ENCODE measurements at regions of chr11 and their contacts with region 1.

Region 1: GRCh38 chr11:121464352-121464946 is 11.7 kb upstream of the SORL1-AS1 start:
- DNase-seq: peak in 7 of 9 donors; percentile 29 to 83 (median 45)
- ATAC-seq: peak; percentile 66
- H3K4me3 ChIP-seq: peak overlapping the region; percentile 23
- H3K4me3 Mint-ChIP-seq: peak overlapping the region; percentile 50 to 99 (median 80)
- H3K27ac ChIP-seq: peak overlapping the region; percentile 77
- H3K27ac Mint-ChIP-seq: peak overlapping the region; percentile 85 to 99 (median 92)
- H3K4me1 ChIP-seq: peaks cover 97 to 99% of the 10 kb centered on the region in 2 donors
- H3K4me1 Mint-ChIP-seq: peaks cover 92 to 100% (median 96%) of the 10 kb centered on the region in 7 donors
- H3K27me3 ChIP-seq: no peaks in the 10 kb centered on the region
- H3K27me3 Mint-ChIP-seq: no peaks in the 10 kb centered on the region

Region 2: GRCh38 chr11:121328967-121329679 is 135.3 kb before region 1 on chr11:
- CTCF ChIA-PET with region 1: no interaction called
- POLR2A ChIA-PET with region 1: interaction called, 14 read pairs
- intact Hi-C with region 1: loop called in 1 of 2 experiments (anchors 2 kb)
- DNase-seq: peak in 4 of 9 donors; percentile 5 to 18 (median 8)
- ATAC-seq: peak; percentile 54
- H3K4me3 ChIP-seq: no peak overlapping the region
- H3K4me3 Mint-ChIP-seq: no peak overlapping the region
- H3K27ac ChIP-seq: no peak overlapping the region
- H3K27ac Mint-ChIP-seq: no peak overlapping the region
- H3K4me1 ChIP-seq: peaks cover 19 to 26% of the 10 kb centered on the region in 2 donors
- H3K4me1 Mint-ChIP-seq: peaks cover 3 to 20% (median 9%) of the 10 kb centered on the region in 7 donors
- H3K27me3 ChIP-seq: no peaks in the 10 kb centered on the region
- H3K27me3 Mint-ChIP-seq: peaks cover 0 to 2% (median 0%) of the 10 kb centered on the region in 5 donors

Region 3: DNA sequence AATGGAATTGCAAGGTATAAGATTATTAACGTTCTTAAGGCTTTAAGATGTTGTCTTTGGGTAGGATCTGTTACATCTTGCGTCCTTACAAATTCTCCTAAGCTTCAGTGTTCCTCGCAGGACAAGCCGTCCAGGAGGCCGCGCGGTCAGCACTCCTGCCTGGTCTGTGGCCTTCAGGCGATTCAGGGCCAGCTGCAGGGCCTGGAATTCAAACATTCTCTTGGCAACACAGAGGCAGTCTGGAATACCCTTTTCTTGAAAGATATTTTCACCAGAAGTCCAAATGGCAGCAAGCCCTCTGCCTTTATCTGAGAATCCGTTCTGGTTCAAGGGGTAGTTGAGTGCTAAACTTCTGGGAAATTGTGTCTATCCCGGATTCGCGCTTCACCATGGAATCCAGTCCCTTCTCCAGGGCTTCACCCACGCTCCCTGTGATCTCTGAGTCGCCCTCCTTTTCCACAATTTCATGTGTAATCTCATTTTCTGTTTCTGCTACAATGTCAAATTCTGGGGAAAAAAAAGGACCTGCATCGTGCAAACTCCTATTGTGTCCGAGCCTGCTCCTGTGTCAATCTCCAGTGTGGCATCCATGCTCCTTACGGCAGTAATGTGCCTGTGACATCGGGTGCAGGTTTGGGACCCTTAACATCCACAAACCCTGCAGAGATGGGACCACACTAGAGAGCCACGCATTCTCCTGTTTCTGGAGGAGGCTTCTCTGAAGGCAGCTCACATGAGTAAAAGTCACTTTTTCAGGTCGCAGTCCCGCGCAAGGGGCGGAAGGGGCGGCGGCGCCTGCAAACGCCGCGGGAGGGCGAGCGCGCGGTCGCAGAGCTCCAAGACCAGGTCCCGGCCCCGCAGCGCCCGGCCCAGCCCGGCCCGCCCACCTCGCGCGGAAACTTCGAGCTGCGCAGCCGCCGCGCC is 37.7 kb before region 1 on chr11:
- CTCF ChIA-PET with region 1: interaction called, 5 read pairs
- POLR2A ChIA-PET with region 1: interaction called, 10 read pairs
- intact Hi-C with region 1: no loop called
- DNase-seq: peak in 6 of 9 donors; percentile 30 to 56 (median 36)
- ATAC-seq: peak; percentile 79
- H3K4me3 ChIP-seq: peak overlapping the region; percentile 44
- H3K4me3 Mint-ChIP-seq: peak overlapping the region; percentile 67 to 86 (median 78)
- H3K27ac ChIP-seq: peak overlapping the region; percentile 37
- H3K27ac Mint-ChIP-seq: peak overlapping the region; percentile 5 to 89 (median 43)
- H3K4me1 ChIP-seq: peaks cover 0 to 27% of the 10 kb centered on the region in 2 donors
- H3K4me1 Mint-ChIP-seq: peaks cover 34 to 70% (median 54%) of the 10 kb centered on the region in 7 donors
- H3K27me3 ChIP-seq: no peaks in the 10 kb centered on the region
- H3K27me3 Mint-ChIP-seq: peaks cover 0 to 3% (median 0%) of the 10 kb centered on the region in 5 donors

Region 4: DNA sequence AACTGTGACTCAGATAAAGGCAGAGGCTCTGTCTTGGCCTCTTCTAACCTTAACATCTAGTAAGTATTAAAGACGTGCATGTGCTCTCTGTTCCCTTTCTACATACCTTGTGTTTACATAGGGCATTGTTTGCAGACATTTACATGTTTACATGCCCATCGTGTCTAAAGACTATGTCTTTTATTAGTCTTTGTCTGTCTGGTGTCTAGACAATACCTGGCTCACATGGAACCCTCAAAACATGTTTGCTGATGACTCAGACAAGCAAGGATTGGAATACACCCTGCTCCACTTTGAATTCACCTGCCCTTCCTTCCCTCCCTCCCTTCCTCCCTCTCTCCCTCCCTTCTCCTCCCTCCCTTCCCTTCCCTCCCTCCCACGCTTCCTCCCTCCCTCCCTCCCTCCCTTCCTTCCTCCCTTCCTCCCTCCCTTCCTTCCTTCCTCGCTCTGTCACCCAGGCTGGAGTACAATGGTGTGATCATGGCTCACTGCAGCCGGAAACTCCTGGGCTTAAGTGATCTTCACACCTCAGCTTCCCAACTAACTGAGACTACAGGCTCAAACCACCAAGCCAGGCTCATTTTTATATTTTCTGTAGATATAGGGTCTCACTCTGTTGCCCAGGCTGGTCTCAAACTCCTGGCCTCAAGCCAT is 12.1 kb after region 1 on chr11:
- CTCF ChIA-PET with region 1: interaction called, 9 read pairs
- POLR2A ChIA-PET with region 1: interaction called, 25 read pairs
- intact Hi-C with region 1: no loop called
- DNase-seq: no peak
- ATAC-seq: no peak
- H3K4me3 ChIP-seq: no peak overlapping the region
- H3K4me3 Mint-ChIP-seq: peak overlapping the region in 2 of 10 donors; percentile 6 to 75
- H3K27ac ChIP-seq: no peak overlapping the region
- H3K27ac Mint-ChIP-seq: peak overlapping the region; percentile 23 to 90 (median 66)
- H3K4me1 ChIP-seq: peaks cover 13 to 48% of the 10 kb centered on the region in 2 donors
- H3K4me1 Mint-ChIP-seq: peaks cover 50 to 95% (median 83%) of the 10 kb centered on the region in 7 donors
- H3K27me3 ChIP-seq: no peaks in the 10 kb centered on the region
- H3K27me3 Mint-ChIP-seq: no peaks in the 10 kb centered on the region

Region 5: GRCh38 chr11:121482231-121483129 is 18.0 kb after region 1 on chr11:
- CTCF ChIA-PET with region 1: interaction called, 9 read pairs
- POLR2A ChIA-PET with region 1: interaction called, 25 read pairs
- intact Hi-C with region 1: loop called (anchors 1 kb)
- DNase-seq: peak in 8 of 9 donors; percentile 45 to 72 (median 67)
- ATAC-seq: peak; percentile 87
- H3K4me3 ChIP-seq: peak overlapping the region; percentile 30
- H3K4me3 Mint-ChIP-seq: peak overlapping the region; percentile 73 to 89 (median 86)
- H3K27ac ChIP-seq: peak overlapping the region; percentile 61
- H3K27ac Mint-ChIP-seq: peak overlapping the region; percentile 84 to 97 (median 94)
- H3K4me1 ChIP-seq: peaks cover 25 to 44% of the 10 kb centered on the region in 2 donors
- H3K4me1 Mint-ChIP-seq: peaks cover 50 to 90% (median 81%) of the 10 kb centered on the region in 7 donors
- H3K27me3 ChIP-seq: no peaks in the 10 kb centered on the region
- H3K27me3 Mint-ChIP-seq: no peaks in the 10 kb centered on the region

Region 6: GRCh38 chr11:121494355-121495099 is 30.1 kb after region 1 on chr11:
- CTCF ChIA-PET with region 1: interaction called, 3 read pairs
- POLR2A ChIA-PET with region 1: interaction called, 17 read pairs
- intact Hi-C with region 1: no loop called
- DNase-seq: peak in 7 of 9 donors; percentile 11 to 36 (median 26)
- ATAC-seq: peak; percentile 72
- H3K4me3 ChIP-seq: no peak overlapping the region
- H3K4me3 Mint-ChIP-seq: peak overlapping the region; percentile 51 to 83 (median 70)
- H3K27ac ChIP-seq: peak overlapping the region; percentile 53
- H3K27ac Mint-ChIP-seq: peak overlapping the region; percentile 44 to 89 (median 79)
- H3K4me1 ChIP-seq: peaks cover 15 to 31% of the 10 kb centered on the region in 2 donors
- H3K4me1 Mint-ChIP-seq: peaks cover 34 to 84% (median 72%) of the 10 kb centered on the region in 7 donors
- H3K27me3 ChIP-seq: no peaks in the 10 kb centered on the region
- H3K27me3 Mint-ChIP-seq: no peaks in the 10 kb centered on the region

Region 7: DNA sequence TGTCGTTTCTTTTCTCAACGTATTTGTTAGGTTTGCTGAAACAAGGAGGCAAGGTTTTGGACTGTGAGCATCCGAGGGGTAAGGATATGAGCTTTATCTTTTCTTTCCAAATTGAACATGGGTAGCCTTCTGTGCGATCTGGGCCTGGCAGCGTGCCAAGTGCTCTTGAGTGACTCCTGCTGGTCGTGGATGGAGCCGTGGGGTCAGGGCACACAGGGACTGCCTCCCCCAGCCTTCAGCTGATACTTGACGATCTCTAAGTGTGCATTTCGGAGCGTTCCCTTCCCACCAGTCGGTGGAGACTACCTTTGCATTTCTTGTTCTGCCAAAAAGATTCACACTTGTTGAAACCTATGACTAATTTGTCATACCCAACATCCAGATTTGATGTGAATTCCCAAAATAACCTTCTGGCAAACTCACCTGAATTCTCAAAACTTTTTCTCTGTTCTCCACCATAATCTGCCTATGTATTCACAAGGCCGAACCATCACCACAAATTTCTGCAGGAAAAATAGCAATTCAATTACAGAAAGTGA is 1770.7 kb after region 1 on chr11:
- CTCF ChIA-PET with region 1: no interaction called
- POLR2A ChIA-PET with region 1: no interaction called
- intact Hi-C with region 1: no loop called
- DNase-seq: peak in 8 of 9 donors; percentile 20 to 59 (median 33)
- ATAC-seq: no peak
- H3K4me3 ChIP-seq: no peak overlapping the region
- H3K4me3 Mint-ChIP-seq: no peak overlapping the region
- H3K27ac ChIP-seq: no peak overlapping the region
- H3K27ac Mint-ChIP-seq: peak overlapping the region in 2 of 9 donors; percentile 29 to 93
- H3K4me1 ChIP-seq: peaks cover 12 to 17% of the 10 kb centered on the region in 2 donors
- H3K4me1 Mint-ChIP-seq: peaks cover 14 to 43% (median 17%) of the 10 kb centered on the region in 7 donors
- H3K27me3 ChIP-seq: no peaks in the 10 kb centered on the region
- H3K27me3 Mint-ChIP-seq: peaks cover 0 to 8% (median 0%) of the 10 kb centered on the region in 5 donors